Endothelial cell of umbilical vein (primary cell): ENCODE measurements at regions of chr18 and their contacts with region 1.

Region 1: GRCh38 chr18:27750014-27750413 is 426.9 kb downstream of the CDH2 start:
- DNase-seq: peak; percentile 29
- H3K4me3 ChIP-seq: no peak overlapping the region
- H3K27ac ChIP-seq: no peak overlapping the region
- H3K4me1 ChIP-seq: no peaks in the 10 kb centered on the region
- H3K27me3 ChIP-seq: peaks cover 0 to 4% of the 10 kb centered on the region in 2 experiments
- CTCF ChIP-seq: peak; percentile 53 to 56
- POLR2A ChIP-seq: no peak

Region 2: GRCh38 chr18:27685807-27686412 is 64.1 kb before region 1 on chr18:
- CTCF ChIA-PET with region 1: interaction called, 148 read pairs
- POLR2A ChIA-PET with region 1: no interaction called
- dilution Hi-C with region 1: no loop called
- intact Hi-C with region 1: loop called (anchors 1 kb)
- DNase-seq: peak; percentile 40
- H3K4me3 ChIP-seq: no peak overlapping the region
- H3K27ac ChIP-seq: no peak overlapping the region
- H3K4me1 ChIP-seq: no peaks in the 10 kb centered on the region
- H3K27me3 ChIP-seq: no peaks in the 10 kb centered on the region
- CTCF ChIP-seq: peak; percentile 58
- POLR2A ChIP-seq: no peak

Region 3: GRCh38 chr18:27735113-27735512 is 14.9 kb before region 1 on chr18:
- CTCF ChIA-PET with region 1: interaction called, 11 read pairs
- POLR2A ChIA-PET with region 1: no interaction called
- dilution Hi-C with region 1: no loop called
- intact Hi-C with region 1: no loop called
- DNase-seq: no peak
- H3K4me3 ChIP-seq: no peak overlapping the region
- H3K27ac ChIP-seq: no peak overlapping the region
- H3K4me1 ChIP-seq: no peaks in the 10 kb centered on the region
- H3K27me3 ChIP-seq: peaks cover 0 to 2% of the 10 kb centered on the region in 2 experiments
- CTCF ChIP-seq: no peak
- POLR2A ChIP-seq: no peak

Region 4: DNA sequence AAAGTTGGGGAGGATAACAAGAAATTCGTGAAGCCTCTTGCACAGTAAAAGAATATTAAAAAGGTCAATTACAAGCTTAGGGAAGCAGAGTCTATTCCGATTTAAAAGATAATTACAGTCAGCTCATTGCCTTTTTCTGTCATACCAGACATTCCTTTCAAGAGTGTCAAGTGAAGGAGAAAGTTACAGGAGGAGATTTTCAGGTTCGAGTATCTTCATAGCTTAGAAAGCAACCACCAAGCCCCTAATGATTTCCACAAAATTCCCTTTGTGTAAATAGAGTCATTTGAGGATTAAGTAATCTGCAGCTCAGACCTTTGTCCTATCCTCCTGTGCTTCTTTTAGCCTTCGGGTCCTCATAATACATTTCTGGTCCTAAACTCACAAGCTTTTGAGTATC is 12.0 kb after region 1 on chr18:
- CTCF ChIA-PET with region 1: interaction called, 27 read pairs
- POLR2A ChIA-PET with region 1: no interaction called
- dilution Hi-C with region 1: no loop called
- intact Hi-C with region 1: no loop called
- DNase-seq: no peak
- H3K4me3 ChIP-seq: no peak overlapping the region
- H3K27ac ChIP-seq: no peak overlapping the region
- H3K4me1 ChIP-seq: no peaks in the 10 kb centered on the region
- H3K27me3 ChIP-seq: peaks cover 0 to 15% of the 10 kb centered on the region in 2 experiments
- CTCF ChIP-seq: no peak
- POLR2A ChIP-seq: no peak

Region 5: GRCh38 chr18:27769152-27769551 is 19.1 kb after region 1 on chr18:
- CTCF ChIA-PET with region 1: interaction called, 27 read pairs
- POLR2A ChIA-PET with region 1: no interaction called
- dilution Hi-C with region 1: no loop called
- intact Hi-C with region 1: no loop called
- DNase-seq: no peak
- H3K4me3 ChIP-seq: no peak overlapping the region
- H3K27ac ChIP-seq: no peak overlapping the region
- H3K4me1 ChIP-seq: no peaks in the 10 kb centered on the region
- H3K27me3 ChIP-seq: peaks cover 5 to 32% of the 10 kb centered on the region in 2 experiments
- CTCF ChIP-seq: no peak
- POLR2A ChIP-seq: no peak